ENCODE measurements at regions of chr2 and their contacts with region 1.

Region 1: DNA sequence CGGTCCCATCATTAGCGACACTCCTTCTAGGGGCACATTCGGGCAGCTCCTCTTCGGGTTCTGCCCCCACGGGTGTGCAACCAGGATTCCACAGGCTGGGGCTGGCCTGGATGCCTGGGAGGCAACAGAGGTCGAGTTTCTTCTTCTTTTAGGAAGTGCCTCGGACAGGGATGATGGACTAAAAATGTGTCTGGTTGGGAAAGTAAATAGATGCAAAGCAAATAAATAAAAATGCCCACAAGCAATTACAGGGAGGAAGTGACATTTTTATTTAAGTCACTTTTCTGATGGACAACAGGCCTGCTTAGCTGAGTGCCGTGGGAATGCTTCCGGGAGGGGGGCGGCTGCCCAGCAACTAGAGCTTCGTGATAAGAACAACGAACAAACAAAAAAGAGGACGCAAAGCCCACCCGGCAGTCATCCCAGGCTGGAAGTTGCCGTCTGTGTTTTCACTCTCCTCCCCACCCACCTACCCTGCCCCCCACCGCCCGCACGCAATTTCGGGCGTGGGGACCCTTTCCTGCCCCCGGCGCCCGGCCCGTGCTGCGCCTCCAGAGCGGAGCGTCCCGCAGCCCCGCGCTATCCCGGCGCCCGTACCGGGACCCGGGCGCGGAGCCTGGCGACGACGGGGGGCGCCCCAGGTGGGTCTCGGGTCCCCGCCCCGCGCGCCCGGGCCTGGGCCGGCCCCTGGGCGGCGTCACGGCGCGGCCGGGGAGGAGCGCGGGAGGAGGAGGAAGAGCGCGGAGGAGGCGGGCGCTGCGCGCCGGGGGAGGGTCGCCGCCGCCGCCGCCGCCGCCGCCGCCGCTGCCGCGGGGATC is 412 bp upstream of the NCK2 start:
- DNase-seq: peak; percentile 60 to 80 (median 70)
- ATAC-seq: peak; percentile 72
- H3K4me3 Mint-ChIP-seq: peak overlapping the region; percentile 78 to 93 (median 87)
- H3K27ac Mint-ChIP-seq: peak overlapping the region; percentile 87 to 99 (median 96)
- H3K4me1 Mint-ChIP-seq: peaks cover 52 to 86% (median 79%) of the 10 kb centered on the region in 4 donors
- H3K27me3 Mint-ChIP-seq: no peaks in the 10 kb centered on the region

Region 2: DNA sequence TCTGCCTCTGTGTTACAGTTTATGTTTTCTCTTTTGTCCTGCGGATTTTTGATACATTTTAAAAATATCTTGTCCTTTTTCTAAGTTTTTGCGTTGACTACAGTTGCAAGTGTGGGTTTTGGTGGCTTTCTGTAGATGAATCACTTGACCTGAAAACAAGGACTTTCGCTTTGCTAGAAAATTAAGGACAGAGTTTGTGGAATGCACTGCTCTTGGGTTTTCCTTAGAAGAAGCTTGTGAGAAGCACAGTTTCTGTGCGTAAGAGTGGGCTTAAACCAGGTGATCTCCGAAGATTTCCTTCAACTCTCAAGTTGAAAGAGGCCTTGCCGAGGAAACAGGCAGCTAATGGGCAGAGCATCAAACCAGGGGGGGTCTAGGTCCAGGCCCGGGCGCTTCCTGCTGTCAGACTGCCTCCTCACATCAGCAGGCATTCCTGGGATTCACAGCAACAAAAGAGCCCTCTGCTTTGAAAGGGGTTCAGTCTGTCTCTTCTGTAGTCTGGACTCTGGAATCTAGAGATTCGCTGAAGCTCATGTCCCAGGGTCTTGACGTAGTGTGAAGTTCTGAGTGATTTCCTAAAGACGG is 17.7 kb after region 1 on chr2:
- POLR2A ChIA-PET with region 1: interaction called, 58 read pairs
- DNase-seq: no peak
- ATAC-seq: no peak
- H3K4me3 Mint-ChIP-seq: peak overlapping the region; percentile 16 to 82 (median 63)
- H3K27ac Mint-ChIP-seq: peak overlapping the region; percentile 85 to 95 (median 92)
- H3K4me1 Mint-ChIP-seq: peaks cover 48 to 98% (median 96%) of the 10 kb centered on the region in 4 donors
- H3K27me3 Mint-ChIP-seq: no peaks in the 10 kb centered on the region

Region 3: GRCh38 chr2:105782123-105782522 is 37.8 kb after region 1 on chr2:
- POLR2A ChIA-PET with region 1: interaction called, 37 read pairs
- DNase-seq: peak in 2 of 10 donors; percentile 41 to 43
- ATAC-seq: peak in 1 of 2 donors; percentile 38
- H3K4me3 Mint-ChIP-seq: peak overlapping the region; percentile 70 to 91 (median 82)
- H3K27ac Mint-ChIP-seq: peak overlapping the region; percentile 93 to 97 (median 95)
- H3K4me1 Mint-ChIP-seq: peaks cover 57 to 98% (median 95%) of the 10 kb centered on the region in 4 donors
- H3K27me3 Mint-ChIP-seq: no peaks in the 10 kb centered on the region

Region 4: DNA sequence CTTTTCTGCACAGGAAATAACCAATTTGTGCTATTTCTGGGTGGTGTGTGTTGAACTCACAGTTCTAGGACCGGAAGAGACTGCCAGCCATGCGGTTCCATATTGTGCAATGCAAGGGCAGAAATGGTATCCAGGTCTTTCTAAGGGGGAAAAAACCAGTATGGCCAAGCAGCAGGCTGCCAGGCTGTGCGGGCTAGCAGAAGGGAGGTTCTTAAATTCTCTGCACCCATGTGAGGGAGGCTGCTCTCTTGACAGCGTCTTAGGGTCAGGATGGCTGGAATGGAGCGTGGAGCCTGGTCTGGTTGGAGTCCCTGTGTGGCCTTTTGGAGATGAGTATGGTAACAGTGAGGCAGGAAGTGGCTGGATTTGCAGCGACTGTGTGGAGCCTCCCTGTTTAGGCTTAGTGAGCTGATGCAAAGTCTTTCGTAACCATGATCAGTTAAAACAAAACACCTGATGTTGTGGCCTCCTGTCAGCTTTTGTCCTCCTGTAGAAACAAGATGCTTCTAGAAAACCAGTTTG is 53.1 kb after region 1 on chr2:
- POLR2A ChIA-PET with region 1: interaction called, 28 read pairs
- DNase-seq: peak in 4 of 10 donors; percentile 20 to 56 (median 54)
- ATAC-seq: peak; percentile 5 to 9
- H3K4me3 Mint-ChIP-seq: peak overlapping the region; percentile 64 to 94 (median 85)
- H3K27ac Mint-ChIP-seq: peak overlapping the region; percentile 96 to 100 (median 98)
- H3K4me1 Mint-ChIP-seq: peaks cover 55 to 96% (median 91%) of the 10 kb centered on the region in 4 donors
- H3K27me3 Mint-ChIP-seq: no peaks in the 10 kb centered on the region

Region 5: GRCh38 chr2:105849431-105850179 is 105.3 kb after region 1 on chr2:
- POLR2A ChIA-PET with region 1: no interaction called
- DNase-seq: no peak
- ATAC-seq: peak in 1 of 2 donors; percentile 42
- H3K4me3 Mint-ChIP-seq: peak overlapping the region in 5 of 10 donors; percentile 11 to 62 (median 31)
- H3K27ac Mint-ChIP-seq: peak overlapping the region; percentile 52 to 92 (median 82)
- H3K4me1 Mint-ChIP-seq: peaks cover 40 to 85% (median 80%) of the 10 kb centered on the region in 4 donors
- H3K27me3 Mint-ChIP-seq: no peaks in the 10 kb centered on the region

Region 6: DNA sequence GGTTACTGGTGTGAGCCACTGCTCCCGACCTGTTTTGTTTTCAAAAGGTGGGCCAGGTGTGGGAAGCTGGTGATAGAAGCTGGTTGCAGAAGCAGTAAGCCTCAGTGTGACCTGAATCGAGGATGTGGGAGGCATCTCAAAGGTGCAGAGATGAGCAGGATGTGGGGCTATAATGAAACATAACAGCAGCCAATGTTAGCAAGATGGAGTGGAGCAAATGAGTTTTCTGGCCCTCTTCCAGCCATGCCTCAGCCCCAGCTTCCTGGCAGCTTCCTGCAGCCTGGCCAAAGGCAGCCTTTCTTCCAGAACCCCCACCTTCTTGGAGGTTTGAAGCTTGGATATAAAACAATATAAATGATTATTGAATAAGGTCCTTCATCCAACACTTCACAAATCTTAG is 185.2 kb after region 1 on chr2:
- POLR2A ChIA-PET with region 1: interaction called, 18 read pairs
- DNase-seq: peak in 9 of 10 donors; percentile 9 to 77 (median 54)
- ATAC-seq: peak; percentile 75 to 82
- H3K4me3 Mint-ChIP-seq: peak overlapping the region in 9 of 10 donors; percentile 36 to 82 (median 68)
- H3K27ac Mint-ChIP-seq: peak overlapping the region in 9 of 10 donors; percentile 80 to 96 (median 93)
- H3K4me1 Mint-ChIP-seq: peaks cover 41 to 71% (median 62%) of the 10 kb centered on the region in 4 donors
- H3K27me3 Mint-ChIP-seq: no peaks in the 10 kb centered on the region